Psoas muscle (tissue), 8 donors: ENCODE measurements at regions of chr6 and their contacts with region 1.

Region 1: DNA sequence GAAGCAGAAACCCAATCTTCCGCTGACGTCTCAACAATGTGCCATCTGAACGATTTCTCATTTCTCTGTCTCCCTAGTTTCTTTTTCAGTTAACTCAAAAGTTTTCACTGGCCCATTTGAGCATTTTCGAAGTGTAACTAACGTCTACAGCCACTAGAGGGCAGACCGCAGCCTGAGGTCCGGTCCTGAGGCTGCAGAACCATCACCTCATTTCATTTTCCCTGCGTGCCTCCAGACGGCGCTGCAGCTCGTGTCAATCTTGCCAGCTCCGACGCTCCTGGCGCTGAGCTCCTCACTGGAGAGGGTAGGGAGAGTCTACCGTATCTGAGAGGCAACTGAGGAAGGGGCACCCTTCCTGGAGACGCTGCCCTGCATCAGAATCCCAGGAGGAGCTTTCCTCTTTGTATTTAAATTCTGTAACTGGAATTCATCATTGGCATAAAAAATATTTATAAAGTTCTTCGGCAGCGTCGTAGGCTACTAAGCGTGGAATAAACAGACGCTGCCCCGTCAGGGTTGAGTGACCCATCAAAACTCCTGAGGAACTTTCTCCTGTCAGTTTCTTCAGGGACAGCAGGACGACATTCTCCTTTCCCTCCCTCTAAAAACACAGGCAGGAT is 28.5 kb upstream of the DTNBP1 start:
- DNase-seq: peak; percentile 79 to 92
- ATAC-seq: peak; percentile 99
- H3K4me3 ChIP-seq: peak overlapping the region; percentile 60
- H3K27ac ChIP-seq: peak overlapping the region; percentile 69
- H3K4me1 ChIP-seq: peaks cover 18% of the 10 kb centered on the region
- H3K27me3 ChIP-seq: no peaks in the 10 kb centered on the region
- CTCF ChIP-seq: peak; percentile 100

Region 2: DNA sequence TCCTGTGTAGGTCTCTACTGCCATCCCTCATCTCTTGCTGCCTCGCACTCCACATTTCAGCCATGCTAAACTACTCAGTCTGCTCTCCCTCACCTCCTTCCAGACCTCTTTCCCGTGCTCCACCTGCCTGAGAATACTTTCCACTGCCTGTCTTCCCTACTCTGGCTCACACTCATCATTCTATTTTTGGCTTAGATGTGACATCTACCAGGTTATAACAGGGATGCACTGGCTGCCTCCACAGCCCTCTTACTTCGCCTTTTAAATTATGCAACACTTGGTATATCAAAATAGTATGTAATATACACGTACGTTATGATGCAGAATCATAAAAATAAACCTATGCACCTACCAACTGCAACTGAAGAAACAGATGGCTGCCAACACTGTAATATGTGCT is 194.3 kb after region 1 on chr6:
- intact Hi-C with region 1: loop called in 1 of 2 experiments (anchors 2 kb)
- DNase-seq: no peak
- ATAC-seq: peak; percentile 74 to 94 (median 90)
- H3K4me3 ChIP-seq: no peak overlapping the region
- H3K27ac ChIP-seq: peak overlapping the region; percentile 67
- H3K4me1 ChIP-seq: peaks cover 12% of the 10 kb centered on the region
- H3K27me3 ChIP-seq: no peaks in the 10 kb centered on the region
- CTCF ChIP-seq: no peak

Region 3: DNA sequence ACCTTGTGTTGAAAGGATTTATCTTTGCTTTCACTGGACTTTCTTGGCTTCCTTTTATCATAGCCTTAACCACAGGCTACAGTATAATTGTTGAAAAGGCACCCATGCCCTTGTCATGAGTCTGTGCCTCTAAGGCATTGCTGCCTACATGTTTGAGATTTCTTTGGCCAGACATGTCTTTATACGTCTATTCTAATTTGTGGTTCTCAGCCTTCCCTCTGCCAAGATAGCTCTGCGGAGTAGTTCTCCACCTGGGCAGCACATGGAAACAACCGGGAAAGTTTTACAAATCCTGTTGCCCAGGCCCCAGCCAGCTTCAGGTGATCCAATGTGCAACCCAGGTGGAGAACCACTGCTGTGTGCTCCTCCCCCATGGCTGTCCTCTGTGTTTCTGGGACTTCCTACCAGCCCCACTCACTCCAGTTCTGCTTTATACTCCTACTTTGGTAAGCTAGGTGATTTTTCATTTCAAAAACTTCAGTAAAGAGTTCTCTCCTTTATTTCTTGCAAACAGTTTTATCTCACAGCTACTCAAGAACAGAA is 277.9 kb after region 1 on chr6:
- intact Hi-C with region 1: loop called in 1 of 2 experiments (anchors 1 kb)
- DNase-seq: no peak
- ATAC-seq: no peak
- H3K4me3 ChIP-seq: no peak overlapping the region
- H3K27ac ChIP-seq: no peak overlapping the region
- H3K4me1 ChIP-seq: no peaks in the 10 kb centered on the region
- H3K27me3 ChIP-seq: no peaks in the 10 kb centered on the region
- CTCF ChIP-seq: no peak

Region 4: GRCh38 chr6:16128759-16129622 is 437.6 kb after region 1 on chr6 and contains the start of gene MYLIP:
- intact Hi-C with region 1: loop called (anchors 2 to 5 kb)
- DNase-seq: peak; percentile 98 to 99
- ATAC-seq: peak; percentile 91 to 96 (median 93)
- H3K4me3 ChIP-seq: peak within 1 kb of the TSS; percentile 89
- H3K27ac ChIP-seq: peak within 1 kb of the TSS; percentile 97
- H3K4me1 ChIP-seq: peaks cover 50% of the 10 kb centered on the region
- H3K27me3 ChIP-seq: no peaks in the 10 kb centered on the region
- CTCF ChIP-seq: peak; percentile 84
- total RNA-seq, gene MYLIP: 7.9 to 23.4 (median 14.7) TPM

Region 5: GRCh38 chr6:16183187-16183664 is 491.9 kb after region 1 on chr6:
- intact Hi-C with region 1: loop called (anchors 1 to 5 kb)
- DNase-seq: no peak
- ATAC-seq: peak; percentile 48 to 85 (median 68)
- H3K4me3 ChIP-seq: peak overlapping the region; percentile 24
- H3K27ac ChIP-seq: no peak overlapping the region
- H3K4me1 ChIP-seq: peaks cover 12% of the 10 kb centered on the region
- H3K27me3 ChIP-seq: no peaks in the 10 kb centered on the region
- CTCF ChIP-seq: peak; percentile 76

Region 6: GRCh38 chr6:16206595-16207037 is 515.3 kb after region 1 on chr6:
- intact Hi-C with region 1: loop called in 1 of 2 experiments (anchors 5 kb)
- DNase-seq: no peak
- ATAC-seq: peak; percentile 85 to 96 (median 90)
- H3K4me3 ChIP-seq: no peak overlapping the region
- H3K27ac ChIP-seq: no peak overlapping the region
- H3K4me1 ChIP-seq: peaks cover 9% of the 10 kb centered on the region
- H3K27me3 ChIP-seq: no peaks in the 10 kb centered on the region
- CTCF ChIP-seq: peak; percentile 98